Cardiac septum (tissue), 1 donor: ENCODE measurements at regions of chr12 and their contacts with region 1.

Region 1: GRCh38 chr12:2034633-2035430 is 18.0 kb upstream of the CACNA1C start:
- DNase-seq: peak; percentile 93

Region 2: GRCh38 chr12:1650260-1650977 is 384.4 kb before region 1 on chr12:
- intact Hi-C with region 1: loop called (anchors 10 kb)
- DNase-seq: no peak

Region 3: GRCh38 chr12:1747609-1748008 is 287.2 kb before region 1 on chr12:
- intact Hi-C with region 1: no loop called
- DNase-seq: no peak

Region 4: DNA sequence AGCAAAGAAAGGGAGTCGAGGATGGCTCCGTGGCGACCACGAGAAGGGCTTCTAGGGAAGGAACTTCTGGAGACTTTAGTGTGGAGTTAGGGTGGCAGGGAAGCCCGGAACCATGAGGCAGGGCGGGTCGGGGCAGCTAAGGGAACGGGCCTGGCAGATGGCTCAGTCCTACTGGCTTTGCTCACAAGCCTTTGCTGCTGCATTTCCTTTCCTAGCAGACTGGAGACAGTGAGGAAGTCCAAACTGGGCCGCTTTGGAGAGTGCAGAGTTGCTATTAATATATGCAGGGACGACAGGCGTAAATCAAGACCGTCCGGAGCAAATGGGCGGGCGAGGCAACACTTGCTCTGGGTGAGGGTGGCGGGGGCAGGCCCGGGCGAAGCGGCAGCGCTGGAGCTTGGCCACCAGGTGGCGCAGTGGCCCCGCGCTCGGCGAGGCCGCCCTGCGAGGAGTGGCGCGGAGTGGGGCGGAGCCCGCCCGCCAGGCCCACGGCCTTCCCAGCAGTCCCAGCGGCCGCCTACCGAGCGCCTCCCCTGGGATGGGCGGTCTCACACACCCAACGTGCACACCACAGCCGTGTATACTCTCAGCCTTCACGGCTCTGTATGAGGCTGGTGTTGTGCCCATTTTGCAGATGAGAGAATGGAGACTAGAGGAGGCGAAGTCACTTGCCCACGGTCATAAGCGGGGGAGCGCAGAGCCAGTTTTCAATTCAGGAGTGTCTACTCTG is 238.9 kb before region 1 on chr12:
- intact Hi-C with region 1: loop called (anchors 5 kb)
- DNase-seq: peak; percentile 97

Region 5: GRCh38 chr12:1972856-1973317 is 61.9 kb before region 1 on chr12:
- intact Hi-C with region 1: loop called (anchors 5 kb)
- DNase-seq: no peak

Region 6: GRCh38 chr12:1993341-1993740 is 41.5 kb before region 1 on chr12:
- intact Hi-C with region 1: loop called (anchors 5 kb)
- DNase-seq: no peak